ENCODE measurements at regions of chr17 and their contacts with region 1.

Region 1: DNA sequence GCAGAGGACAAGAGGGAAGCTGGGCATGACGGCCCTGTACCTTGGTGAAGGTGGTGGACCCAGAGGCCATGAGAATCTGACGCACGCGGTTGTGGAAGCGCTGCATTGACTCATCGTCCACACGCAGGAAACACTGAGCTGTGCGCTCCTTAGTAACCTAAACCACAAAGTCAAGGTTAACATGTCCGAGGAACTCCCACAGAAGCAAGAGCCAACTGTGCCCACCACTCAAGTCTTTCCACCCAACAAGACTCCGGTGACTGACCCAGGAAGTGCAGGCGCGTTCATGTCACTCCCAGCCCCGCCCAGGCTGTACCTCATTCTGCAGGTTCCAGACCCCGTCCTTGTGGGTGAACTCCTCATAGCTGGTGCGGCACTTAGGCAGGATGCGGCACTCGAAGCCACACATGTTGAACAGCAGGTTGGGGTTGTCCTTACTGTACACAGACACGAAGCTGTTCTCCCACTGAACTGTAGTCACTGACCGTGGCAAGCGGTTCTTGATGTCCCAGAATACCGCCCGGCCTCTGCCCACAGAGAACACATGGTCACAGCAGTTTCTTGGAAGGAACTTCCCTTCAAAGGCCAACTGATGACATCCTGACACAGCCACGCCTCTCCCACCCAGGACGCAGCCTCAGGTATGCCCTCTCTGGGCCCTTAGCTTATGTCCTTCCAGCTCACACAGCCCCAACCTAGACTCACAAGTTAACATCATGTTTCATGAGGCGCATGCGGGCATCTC is 11.5 kb downstream of the PRPF8 start:
- H3K4me3 Mint-ChIP-seq: no peak overlapping the region
- H3K27ac Mint-ChIP-seq: peak overlapping the region; percentile 6
- H3K4me1 Mint-ChIP-seq: peaks cover 29% of the 10 kb centered on the region
- H3K27me3 Mint-ChIP-seq: no peaks in the 10 kb centered on the region

Region 2: DNA sequence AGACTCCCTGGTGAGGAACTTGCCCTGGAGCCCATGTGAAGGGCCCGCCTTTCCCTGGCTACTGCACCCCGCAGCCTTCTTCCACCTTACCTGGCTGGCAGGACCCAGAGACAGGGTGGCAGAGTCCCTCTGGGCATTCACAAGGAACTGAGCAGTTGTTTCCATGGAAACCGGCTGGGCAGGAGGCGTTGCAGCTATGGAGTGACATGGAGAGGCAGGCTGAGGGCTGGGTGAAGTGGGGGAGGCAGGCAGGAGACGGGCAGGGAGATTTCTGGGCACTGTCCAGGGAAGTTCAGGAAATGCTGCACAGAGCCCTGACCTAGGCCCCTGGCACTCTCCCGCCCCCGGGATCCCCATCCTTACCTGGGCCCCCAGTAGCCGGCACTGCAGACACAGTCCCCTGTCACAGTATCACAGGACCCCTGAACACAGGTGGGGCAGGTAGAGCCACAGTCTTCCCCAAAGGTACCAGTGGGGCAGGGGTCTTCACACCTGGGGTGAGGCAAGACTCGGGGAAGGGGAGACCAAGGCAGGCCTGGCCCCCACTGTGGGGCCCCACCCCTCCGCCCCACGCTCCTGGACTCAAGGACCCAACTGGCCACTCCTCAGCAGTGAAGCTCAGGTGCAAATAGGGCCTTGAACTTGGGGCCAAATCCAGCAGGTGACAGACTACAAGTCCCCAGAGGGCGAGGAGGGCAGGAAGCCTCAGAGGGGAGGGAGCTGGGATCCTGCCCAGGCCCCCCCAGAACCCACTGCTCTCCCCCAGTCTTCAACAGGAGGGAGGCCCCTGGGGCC is 33.5 kb before region 1 on chr17:
- intact Hi-C with region 1: no loop called
- H3K4me3 Mint-ChIP-seq: no peak overlapping the region
- H3K27ac Mint-ChIP-seq: peak overlapping the region; percentile 63
- H3K4me1 Mint-ChIP-seq: peaks cover 36% of the 10 kb centered on the region
- H3K27me3 Mint-ChIP-seq: peaks cover 2% of the 10 kb centered on the region

Region 3: GRCh38 chr17:1865252-1866037 is 192.2 kb after region 1 on chr17:
- intact Hi-C with region 1: loop called (anchors 2 kb)
- H3K4me3 Mint-ChIP-seq: no peak overlapping the region
- H3K27ac Mint-ChIP-seq: no peak overlapping the region
- H3K4me1 Mint-ChIP-seq: no peaks in the 10 kb centered on the region
- H3K27me3 Mint-ChIP-seq: no peaks in the 10 kb centered on the region